GM12878 (cell line): ENCODE measurements at regions of chrX and their contacts with region 1.

Region 1: DNA sequence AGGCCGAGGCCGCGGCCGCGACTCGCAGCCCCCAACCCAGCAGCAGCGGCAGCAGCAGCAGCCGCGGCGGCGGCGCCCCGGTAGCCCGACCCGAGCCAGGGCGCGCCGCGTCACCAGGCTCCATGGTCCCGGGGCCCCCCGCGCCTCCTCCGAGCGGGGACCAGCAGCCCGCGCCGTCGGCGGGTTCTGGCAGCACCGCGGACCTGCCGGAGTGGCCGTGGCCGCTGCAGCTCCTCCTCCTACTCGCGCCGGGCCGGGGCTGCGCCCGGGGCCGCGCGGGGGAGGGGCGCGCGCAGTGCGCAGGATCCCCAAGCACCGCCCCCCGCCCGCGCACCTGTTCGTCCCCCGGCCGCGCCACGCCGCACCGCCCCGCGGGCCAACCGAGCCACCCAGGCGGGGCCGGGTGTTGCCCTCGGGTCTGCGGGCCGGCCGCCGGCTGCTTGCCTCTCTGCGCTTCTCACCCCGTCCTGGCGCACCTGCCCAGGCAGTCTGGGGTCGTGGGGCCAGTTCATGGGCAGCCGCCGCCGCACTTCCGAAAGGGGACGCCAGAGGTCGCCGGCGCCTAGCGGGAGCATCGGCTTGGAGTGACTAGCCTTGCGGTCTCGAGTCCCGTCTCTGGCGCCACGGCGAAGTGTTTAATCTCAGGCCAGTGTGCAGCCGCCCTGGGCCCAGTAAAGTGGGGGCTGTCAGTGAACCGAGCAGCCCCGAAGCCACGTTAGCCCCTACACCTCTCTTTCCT is at the start of gene SLC9A7:
- DNase-seq: peak; percentile 33
- ATAC-seq: peak; percentile 72
- H3K4me3 ChIP-seq: peak within 1 kb of the TSS; percentile 69
- H3K27ac ChIP-seq: peak within 1 kb of the TSS; percentile 63
- H3K4me1 ChIP-seq: 0 out of 2 replicates have a peak, but pooled peaks cover 3% of the 10 kb centered on the region
- H3K27me3 ChIP-seq: no peaks in the 10 kb centered on the region
- CTCF ChIP-seq: peak; percentile 66 to 88 (median 84)
- EP300 ChIP-seq: no peak
- POLR2A ChIP-seq: peak; percentile 67
- RAD21 ChIP-seq: peak; percentile 78
- polyA plus RNA-seq, gene SLC9A7: 5.0 to 5.2 TPM

Region 2: GRCh38 chrX:46693149-46693548 is 65.9 kb before region 1 on chrX:
- CTCF ChIA-PET with region 1: interaction called, 4 read pairs
- POLR2A ChIA-PET with region 1: interaction called, 10 read pairs
- RAD21 ChIA-PET with region 1: interaction called, 3 read pairs
- SMC1A ChIA-PET with region 1: interaction called, 7 read pairs
- in situ Hi-C with region 1: no loop called
- intact Hi-C with region 1: no loop called
- DNase-seq: peak; percentile 62
- ATAC-seq: peak; percentile 92
- H3K4me3 ChIP-seq: no peak overlapping the region
- H3K27ac ChIP-seq: peak overlapping the region; percentile 30; the same call in 1 of the 2 replicates
- H3K4me1 ChIP-seq: peaks cover 23% of the 10 kb centered on the region
- H3K27me3 ChIP-seq: no peaks in the 10 kb centered on the region
- CTCF ChIP-seq: no peak
- EP300 ChIP-seq: peak; percentile 10 to 71; a peak in 3 of 4 replicates
- POLR2A ChIP-seq: no peak
- RAD21 ChIP-seq: no peak

Region 3: DNA sequence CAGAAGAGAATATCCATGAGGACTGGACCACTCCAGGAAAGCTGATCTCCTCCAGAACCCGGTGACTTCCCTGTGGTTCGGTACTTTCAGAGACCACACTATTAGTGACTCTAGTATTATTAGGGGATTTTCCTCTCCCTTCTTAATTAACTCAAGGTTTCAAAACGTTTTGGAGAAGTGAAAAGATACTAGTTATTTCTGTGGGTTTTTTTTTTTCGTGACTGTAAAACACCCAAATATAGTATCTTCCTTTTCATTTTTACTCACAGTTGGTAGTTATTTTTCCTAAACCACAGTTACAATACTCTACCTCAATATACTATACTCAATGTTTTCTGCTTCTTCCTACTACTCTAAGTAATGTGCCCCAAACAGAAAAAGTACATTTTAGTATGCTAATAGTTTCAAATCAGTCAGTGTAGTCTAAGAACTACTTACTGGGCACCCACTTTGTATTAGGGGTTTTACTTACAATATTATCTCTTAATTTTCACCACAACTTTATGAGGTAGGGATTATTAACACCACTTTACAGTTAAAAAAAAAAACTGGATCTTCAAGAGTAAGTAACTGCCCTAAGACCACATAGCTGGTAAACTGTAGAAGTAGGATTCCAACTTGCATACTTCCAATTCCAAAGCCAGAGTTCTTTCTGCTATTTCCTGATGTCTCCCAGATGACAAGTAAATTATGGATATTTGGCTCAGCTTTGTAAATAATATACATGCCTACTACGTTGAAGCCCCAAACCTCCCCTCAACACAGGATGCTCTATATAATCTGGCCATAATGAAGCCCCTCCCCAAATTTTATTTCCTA is 45.2 kb before region 1 on chrX:
- CTCF ChIA-PET with region 1: interaction called, 3 read pairs
- POLR2A ChIA-PET with region 1: no interaction called
- RAD21 ChIA-PET with region 1: interaction called, 4 read pairs
- SMC1A ChIA-PET with region 1: interaction called, 11 read pairs
- in situ Hi-C with region 1: no loop called
- intact Hi-C with region 1: loop called (anchors 5 kb)
- DNase-seq: peak; percentile 82
- ATAC-seq: peak; percentile 70
- H3K4me3 ChIP-seq: peak overlapping the region; percentile 33
- H3K27ac ChIP-seq: peak overlapping the region; percentile 89
- H3K4me1 ChIP-seq: peaks cover 60% of the 10 kb centered on the region
- H3K27me3 ChIP-seq: no peaks in the 10 kb centered on the region
- CTCF ChIP-seq: no peak
- EP300 ChIP-seq: peak; percentile 98 to 99
- POLR2A ChIP-seq: no peak
- RAD21 ChIP-seq: no peak

Region 4: DNA sequence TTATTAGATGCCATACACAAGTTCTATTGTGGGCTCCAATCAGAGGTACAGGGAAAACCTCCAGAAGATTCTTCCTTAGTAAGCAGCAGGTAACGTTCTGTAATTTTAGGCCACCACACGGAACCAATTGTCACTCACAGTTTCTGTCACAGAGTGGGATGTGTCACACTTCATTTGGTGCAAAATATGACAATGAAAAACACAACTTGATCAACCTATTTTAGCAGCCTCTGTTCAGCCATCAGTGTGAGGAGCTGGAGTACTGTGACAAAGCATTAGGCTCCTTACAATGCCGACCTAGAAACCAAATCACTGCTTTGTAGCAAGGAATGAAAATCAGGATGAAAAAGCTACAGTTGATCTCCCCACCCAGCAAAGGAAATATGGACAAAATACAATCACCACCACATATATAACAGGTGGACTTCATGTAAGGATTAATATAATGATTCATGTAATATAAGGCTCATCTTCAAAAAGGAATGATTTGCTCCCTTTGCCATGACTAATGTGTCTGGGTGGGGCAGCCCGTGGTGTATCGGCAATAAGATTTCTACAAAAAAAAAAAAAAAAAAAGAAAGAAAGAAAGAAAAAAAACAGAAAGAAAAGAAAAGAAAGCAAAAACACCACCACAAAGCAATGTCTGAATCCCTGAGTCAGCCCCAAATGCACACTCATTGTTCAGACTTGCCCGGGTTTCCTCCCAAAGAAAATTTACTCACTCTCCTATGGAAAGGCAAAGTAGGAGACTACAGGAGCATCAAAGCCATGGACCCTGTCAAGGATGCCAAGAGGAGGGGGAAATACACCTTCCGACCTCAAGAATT is 36.1 kb before region 1 on chrX:
- CTCF ChIA-PET with region 1: interaction called, 3 read pairs
- POLR2A ChIA-PET with region 1: interaction called, 9 read pairs
- RAD21 ChIA-PET with region 1: interaction called, 8 read pairs
- SMC1A ChIA-PET with region 1: interaction called, 10 read pairs
- in situ Hi-C with region 1: no loop called
- intact Hi-C with region 1: no loop called
- DNase-seq: no peak
- ATAC-seq: peak; percentile 64
- H3K4me3 ChIP-seq: peak overlapping the region; percentile 48; the same call in 1 of the 2 replicates
- H3K27ac ChIP-seq: peak overlapping the region; percentile 53
- H3K4me1 ChIP-seq: peaks cover 11% of the 10 kb centered on the region
- H3K27me3 ChIP-seq: no peaks in the 10 kb centered on the region
- CTCF ChIP-seq: no peak
- EP300 ChIP-seq: no peak
- POLR2A ChIP-seq: no peak
- RAD21 ChIP-seq: no peak

Region 5: DNA sequence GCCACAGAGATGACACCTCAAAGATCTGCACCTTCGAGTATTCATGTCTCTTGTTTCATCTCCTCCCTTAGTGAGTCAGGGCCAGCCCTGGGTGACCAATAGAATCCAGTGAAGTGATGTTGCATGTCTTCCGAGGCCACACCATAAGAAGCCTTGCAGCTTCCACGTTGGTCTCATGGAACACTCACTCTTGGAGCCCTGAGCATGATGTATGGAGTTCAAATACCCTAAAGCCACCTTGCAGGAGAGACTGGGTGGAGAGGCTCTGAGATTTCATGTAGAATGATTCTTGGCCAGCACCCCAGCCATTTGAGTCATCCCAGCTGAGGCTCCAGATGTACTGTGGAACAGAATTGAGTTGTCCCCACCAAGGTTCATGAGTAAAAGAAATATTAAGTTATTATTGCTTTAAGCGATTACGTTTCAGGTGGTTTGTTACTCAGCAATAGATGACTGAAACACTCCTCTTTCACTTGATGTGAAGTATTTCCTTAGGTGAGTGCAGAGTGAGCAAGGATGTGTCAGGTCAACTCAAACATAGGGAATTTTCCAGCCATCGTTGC is 72.8 kb after region 1 on chrX:
- CTCF ChIA-PET with region 1: no interaction called
- POLR2A ChIA-PET with region 1: no interaction called
- RAD21 ChIA-PET with region 1: no interaction called
- SMC1A ChIA-PET with region 1: no interaction called
- in situ Hi-C with region 1: no loop called
- intact Hi-C with region 1: no loop called
- DNase-seq: no peak
- ATAC-seq: no peak
- H3K4me3 ChIP-seq: no peak overlapping the region
- H3K27ac ChIP-seq: no peak overlapping the region
- H3K4me1 ChIP-seq: no peaks in the 10 kb centered on the region
- H3K27me3 ChIP-seq: no peaks in the 10 kb centered on the region; a peak in 1 of 4 replicates
- CTCF ChIP-seq: no peak
- EP300 ChIP-seq: no peak
- POLR2A ChIP-seq: no peak
- RAD21 ChIP-seq: no peak

Region 6: GRCh38 chrX:46903458-46904242 is 144.6 kb after region 1 on chrX:
- CTCF ChIA-PET with region 1: no interaction called
- POLR2A ChIA-PET with region 1: no interaction called
- RAD21 ChIA-PET with region 1: no interaction called
- SMC1A ChIA-PET with region 1: no interaction called
- in situ Hi-C with region 1: no loop called
- intact Hi-C with region 1: no loop called
- DNase-seq: peak; percentile 48
- ATAC-seq: peak; percentile 100
- H3K4me3 ChIP-seq: peak overlapping the region; percentile 33; the same call in 1 of the 2 replicates
- H3K27ac ChIP-seq: no peak overlapping the region
- H3K4me1 ChIP-seq: no peaks in the 10 kb centered on the region
- H3K27me3 ChIP-seq: no peaks in the 10 kb centered on the region
- CTCF ChIP-seq: peak; percentile 60 to 67 (median 66)
- EP300 ChIP-seq: no peak
- POLR2A ChIP-seq: no peak
- RAD21 ChIP-seq: peak; percentile 65

Region 7: GRCh38 chrX:46978341-46979291 is 219.5 kb after region 1 on chrX:
- CTCF ChIA-PET with region 1: no interaction called
- POLR2A ChIA-PET with region 1: no interaction called
- RAD21 ChIA-PET with region 1: no interaction called
- SMC1A ChIA-PET with region 1: no interaction called
- in situ Hi-C with region 1: no loop called
- intact Hi-C with region 1: loop called (anchors 2 kb)
- DNase-seq: peak; percentile 39
- ATAC-seq: peak; percentile 99
- H3K4me3 ChIP-seq: no peak overlapping the region
- H3K27ac ChIP-seq: no peak overlapping the region
- H3K4me1 ChIP-seq: no peaks in the 10 kb centered on the region
- H3K27me3 ChIP-seq: peaks cover 0 to 2% of the 10 kb centered on the region in 2 experiments; a peak in 1 of 4 replicates
- CTCF ChIP-seq: peak; percentile 78 to 86 (median 79)
- EP300 ChIP-seq: no peak
- POLR2A ChIP-seq: no peak
- RAD21 ChIP-seq: peak; percentile 76

Region 8: DNA sequence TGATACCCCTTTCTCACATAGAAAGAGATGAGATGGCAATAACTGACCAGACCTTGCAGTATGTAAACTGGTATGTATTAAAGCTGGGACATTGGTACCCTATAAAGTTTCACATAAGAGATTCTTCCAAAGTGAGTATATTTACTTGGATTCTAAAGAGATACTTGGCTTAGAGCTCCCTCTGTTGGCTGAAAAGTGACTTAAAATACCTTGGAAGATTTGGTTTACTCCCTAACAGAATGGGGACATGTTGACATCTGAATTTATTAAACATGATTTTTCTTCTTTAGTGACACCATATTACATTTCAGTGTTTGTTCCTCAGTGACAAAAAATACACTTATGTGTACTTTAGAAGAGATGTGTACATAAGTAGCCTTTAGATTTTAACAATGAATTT is 271.3 kb after region 1 on chrX:
- CTCF ChIA-PET with region 1: interaction called, 6 read pairs
- POLR2A ChIA-PET with region 1: no interaction called
- RAD21 ChIA-PET with region 1: interaction called, 3 read pairs
- SMC1A ChIA-PET with region 1: no interaction called
- in situ Hi-C with region 1: no loop called
- intact Hi-C with region 1: loop called (anchors 5 kb)
- DNase-seq: peak; percentile 2
- ATAC-seq: peak; percentile 64
- H3K4me3 ChIP-seq: no peak overlapping the region
- H3K27ac ChIP-seq: no peak overlapping the region
- H3K4me1 ChIP-seq: no peaks in the 10 kb centered on the region
- H3K27me3 ChIP-seq: no peaks in the 10 kb centered on the region; a peak in 1 of 4 replicates
- CTCF ChIP-seq: peak; percentile 54 to 66 (median 54)
- EP300 ChIP-seq: no peak
- POLR2A ChIP-seq: no peak
- RAD21 ChIP-seq: peak; percentile 75

Region 9: DNA sequence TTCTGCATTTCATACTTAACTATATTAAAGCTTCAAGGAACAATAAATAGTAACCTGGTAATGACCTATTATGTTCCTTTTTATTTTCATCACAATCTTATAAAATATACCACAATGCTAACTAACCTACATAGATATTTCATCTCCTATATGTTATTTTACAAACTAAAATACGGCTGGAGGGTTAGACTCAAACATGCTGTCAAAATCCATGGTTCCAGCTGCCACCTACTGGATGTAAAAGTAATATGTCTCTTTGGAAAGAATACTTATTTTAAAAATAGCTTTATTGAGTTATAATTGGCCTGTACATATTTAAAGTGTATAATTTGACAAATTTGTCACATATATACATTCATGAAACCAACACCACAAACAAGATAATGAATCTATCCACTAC is 334.2 kb after region 1 on chrX:
- CTCF ChIA-PET with region 1: interaction called, 8 read pairs
- POLR2A ChIA-PET with region 1: no interaction called
- RAD21 ChIA-PET with region 1: no interaction called
- SMC1A ChIA-PET with region 1: interaction called, 3 read pairs
- in situ Hi-C with region 1: no loop called
- intact Hi-C with region 1: loop called (anchors 5 kb)
- DNase-seq: no peak
- ATAC-seq: peak; percentile 51; the same call in 2 of the 3 replicates
- H3K4me3 ChIP-seq: no peak overlapping the region
- H3K27ac ChIP-seq: no peak overlapping the region
- H3K4me1 ChIP-seq: no peaks in the 10 kb centered on the region
- H3K27me3 ChIP-seq: no peaks in the 10 kb centered on the region
- CTCF ChIP-seq: peak; percentile 37 to 51 (median 49); a peak in 5 of 6 replicates
- EP300 ChIP-seq: no peak
- POLR2A ChIP-seq: no peak
- RAD21 ChIP-seq: peak; percentile 57

Region 10: DNA sequence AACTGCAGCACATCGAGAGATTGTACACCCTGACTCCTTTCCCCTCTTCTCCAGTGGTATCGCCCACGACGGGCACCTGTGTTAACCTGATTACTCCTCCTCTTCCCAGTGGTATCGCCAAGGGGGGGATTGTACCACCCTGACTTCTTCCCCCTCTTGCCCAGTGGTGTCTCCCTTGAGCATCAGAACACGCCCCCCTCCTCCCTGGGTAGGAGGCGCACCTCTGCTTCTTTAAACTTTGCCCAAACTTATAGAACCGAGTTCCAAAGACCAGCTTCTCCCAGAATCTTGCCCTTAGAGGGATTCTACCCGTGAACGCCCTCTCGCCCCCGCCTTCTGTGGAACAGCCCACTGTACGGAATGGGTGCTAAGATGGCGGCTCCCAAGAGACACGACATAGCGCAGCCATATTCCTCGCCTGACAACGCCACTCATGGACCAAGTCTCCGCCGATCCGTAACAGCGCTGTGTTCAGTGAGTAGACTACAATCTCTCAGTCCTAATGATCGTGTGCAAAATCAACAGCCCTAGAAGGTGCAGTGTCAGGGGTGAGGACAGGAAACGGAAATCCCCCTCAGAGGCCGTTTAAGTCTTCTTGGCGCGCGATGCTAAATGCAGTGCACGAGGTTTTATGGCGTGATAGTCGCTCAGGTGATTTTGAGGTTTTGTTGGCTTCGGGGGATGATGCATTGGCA is 607.1 kb after region 1 on chrX:
- CTCF ChIA-PET with region 1: no interaction called
- POLR2A ChIA-PET with region 1: no interaction called
- RAD21 ChIA-PET with region 1: no interaction called
- SMC1A ChIA-PET with region 1: no interaction called
- in situ Hi-C with region 1: no loop called
- intact Hi-C with region 1: no loop called
- DNase-seq: peak; percentile 37
- ATAC-seq: peak; percentile 78
- H3K4me3 ChIP-seq: peak overlapping the region; percentile 42; the same call in 1 of the 2 replicates
- H3K27ac ChIP-seq: peak overlapping the region; percentile 63
- H3K4me1 ChIP-seq: no peaks in the 10 kb centered on the region
- H3K27me3 ChIP-seq: no peaks in the 10 kb centered on the region
- CTCF ChIP-seq: no peak
- EP300 ChIP-seq: no peak
- POLR2A ChIP-seq: no peak
- RAD21 ChIP-seq: no peak

Region 11: DNA sequence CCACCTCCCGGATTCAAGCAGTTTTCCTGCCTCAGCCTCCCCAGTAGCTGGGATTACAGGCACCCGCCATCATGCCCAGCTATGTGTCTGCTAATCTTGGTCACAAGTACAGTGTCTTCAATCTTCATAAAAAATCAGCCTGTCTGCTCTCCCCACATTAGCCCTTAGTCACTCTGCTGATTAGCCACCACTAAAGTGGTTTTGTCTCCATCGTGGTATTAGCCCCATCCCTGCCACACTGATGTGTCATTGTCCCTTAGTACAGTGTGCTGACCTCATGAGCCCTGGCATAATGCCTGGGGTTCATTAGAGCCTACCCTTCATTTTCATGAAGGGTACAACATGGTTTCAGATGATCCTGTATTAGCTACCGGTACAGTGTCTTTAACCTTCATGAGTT is 661.2 kb after region 1 on chrX:
- CTCF ChIA-PET with region 1: no interaction called
- POLR2A ChIA-PET with region 1: no interaction called
- RAD21 ChIA-PET with region 1: no interaction called
- SMC1A ChIA-PET with region 1: no interaction called
- in situ Hi-C with region 1: no loop called
- intact Hi-C with region 1: no loop called
- DNase-seq: no peak
- ATAC-seq: no peak
- H3K4me3 ChIP-seq: no peak overlapping the region
- H3K27ac ChIP-seq: no peak overlapping the region
- H3K4me1 ChIP-seq: no peaks in the 10 kb centered on the region
- H3K27me3 ChIP-seq: no peaks in the 10 kb centered on the region
- CTCF ChIP-seq: no peak
- EP300 ChIP-seq: no peak
- POLR2A ChIP-seq: no peak
- RAD21 ChIP-seq: no peak